Activated CD4-positive, alpha-beta T cell treated with anti-CD3 and anti-CD28 coated beads for 36 hours (primary cell): ENCODE measurements at regions of chr16 and their contacts with region 1.

Region 1: DNA sequence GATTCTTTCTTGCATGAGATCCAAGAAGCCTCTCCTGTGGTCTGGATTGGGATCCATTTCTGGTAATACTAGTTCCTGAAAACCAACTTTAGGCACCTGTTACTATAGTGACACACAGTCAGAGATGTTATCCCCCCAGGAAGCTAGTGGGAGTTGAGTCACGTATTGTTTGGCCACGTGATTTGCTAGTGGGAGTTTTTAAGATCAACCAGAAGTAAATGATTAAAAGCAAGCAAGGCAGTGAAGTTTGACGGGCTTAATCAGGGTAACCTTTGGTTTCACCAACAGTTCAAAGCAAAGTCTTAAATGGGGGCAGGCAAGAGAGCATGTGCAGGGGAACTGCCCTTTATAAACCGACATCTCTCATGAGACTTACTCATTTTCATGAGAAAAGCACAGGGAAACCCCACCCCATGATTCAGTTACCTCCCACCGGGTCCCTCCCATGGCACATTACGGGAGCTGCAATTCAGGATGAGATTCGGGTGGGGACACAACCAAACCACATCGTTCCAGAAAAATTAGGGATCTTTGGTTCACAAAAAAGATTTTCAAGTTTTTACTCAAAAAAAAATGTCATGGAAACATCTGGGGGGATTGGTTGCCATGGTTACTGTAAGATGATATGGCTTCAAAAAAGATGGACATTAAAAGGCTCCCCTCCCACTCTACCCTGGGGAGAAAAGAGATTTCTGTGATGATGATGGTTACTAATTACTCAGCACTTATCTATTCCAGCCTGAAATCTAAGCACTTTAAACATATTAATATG is 483.1 kb upstream of the ERCC4 start:
- DNase-seq: peak; percentile 37
- ATAC-seq: peak; percentile 71
- H3K4me3 Mint-ChIP-seq: no peak overlapping the region
- H3K27ac Mint-ChIP-seq: peak overlapping the region; percentile 20
- H3K4me1 Mint-ChIP-seq: peaks cover 15% of the 10 kb centered on the region
- H3K27me3 Mint-ChIP-seq: no peaks in the 10 kb centered on the region

Region 2: GRCh38 chr16:12881740-12882139 is 555.1 kb before region 1 on chr16:
- CTCF ChIA-PET with region 1: no interaction called
- POLR2A ChIA-PET with region 1: no interaction called
- intact Hi-C with region 1: no loop called
- DNase-seq: no peak
- ATAC-seq: no peak
- H3K4me3 Mint-ChIP-seq: no peak overlapping the region
- H3K27ac Mint-ChIP-seq: no peak overlapping the region
- H3K4me1 Mint-ChIP-seq: no peaks in the 10 kb centered on the region
- H3K27me3 Mint-ChIP-seq: peaks cover 14% of the 10 kb centered on the region

Region 3: GRCh38 chr16:13206606-13207005 is 230.2 kb before region 1 on chr16:
- CTCF ChIA-PET with region 1: no interaction called
- POLR2A ChIA-PET with region 1: no interaction called
- intact Hi-C with region 1: loop called in 1 of 2 experiments (anchors 5 kb)
- DNase-seq: no peak
- ATAC-seq: no peak
- H3K4me3 Mint-ChIP-seq: no peak overlapping the region
- H3K27ac Mint-ChIP-seq: no peak overlapping the region
- H3K4me1 Mint-ChIP-seq: no peaks in the 10 kb centered on the region
- H3K27me3 Mint-ChIP-seq: no peaks in the 10 kb centered on the region

Region 4: DNA sequence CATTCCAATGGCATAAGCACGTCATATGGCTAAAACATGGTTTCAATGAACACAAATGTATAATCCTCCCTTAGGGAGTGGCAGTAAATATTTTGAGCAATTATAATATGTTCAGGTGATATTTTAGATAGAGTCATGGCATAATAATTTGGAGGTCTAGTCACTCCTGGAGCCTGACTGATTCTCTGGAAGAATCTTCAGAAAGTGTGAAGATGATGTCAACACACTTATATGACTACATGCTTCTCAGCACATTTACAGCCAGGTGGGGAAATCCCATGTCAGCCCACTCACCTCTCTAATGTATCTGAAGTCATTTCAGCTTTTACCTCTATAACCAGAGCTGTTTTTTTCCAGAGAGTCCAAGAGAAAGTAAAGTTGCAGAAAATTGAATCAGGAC is 60.7 kb before region 1 on chr16:
- CTCF ChIA-PET with region 1: no interaction called
- POLR2A ChIA-PET with region 1: interaction called, 4 read pairs
- intact Hi-C with region 1: loop called in 1 of 2 experiments (anchors 5 kb)
- DNase-seq: peak; percentile 63
- ATAC-seq: peak; percentile 90
- H3K4me3 Mint-ChIP-seq: no peak overlapping the region
- H3K27ac Mint-ChIP-seq: no peak overlapping the region
- H3K4me1 Mint-ChIP-seq: peaks cover 4% of the 10 kb centered on the region
- H3K27me3 Mint-ChIP-seq: no peaks in the 10 kb centered on the region

Region 5: DNA sequence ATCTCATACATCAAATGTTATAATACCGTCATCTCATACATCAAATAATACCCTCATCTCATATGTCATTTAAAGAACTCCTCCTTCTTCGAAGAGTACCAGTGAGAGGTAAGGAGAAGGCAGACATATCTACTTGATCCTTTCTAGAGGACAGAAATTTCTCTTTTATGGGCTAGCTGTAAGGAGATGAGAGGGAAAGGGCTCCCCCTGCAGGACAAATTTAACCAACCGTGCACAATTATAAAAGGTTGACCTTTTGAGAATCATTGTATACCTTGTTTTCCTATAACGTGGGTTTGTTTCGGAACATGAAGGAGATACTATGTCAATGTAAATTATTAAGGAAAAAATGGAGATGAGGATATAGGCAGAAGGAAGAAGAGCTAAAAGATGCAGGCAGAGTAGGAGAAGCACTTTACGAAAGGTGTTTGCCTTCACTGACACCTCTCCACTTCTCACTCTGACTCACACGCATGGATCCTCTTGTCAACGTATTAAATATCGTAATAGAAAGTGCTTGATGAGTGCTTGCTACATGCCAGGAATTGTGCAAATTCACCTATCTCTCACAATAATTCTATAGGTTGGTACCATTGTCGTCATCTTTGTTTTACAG is 17.2 kb after region 1 on chr16:
- CTCF ChIA-PET with region 1: interaction called, 10 read pairs
- POLR2A ChIA-PET with region 1: no interaction called
- intact Hi-C with region 1: no loop called
- DNase-seq: peak; percentile 56
- ATAC-seq: no peak
- H3K4me3 Mint-ChIP-seq: no peak overlapping the region
- H3K27ac Mint-ChIP-seq: no peak overlapping the region
- H3K4me1 Mint-ChIP-seq: no peaks in the 10 kb centered on the region
- H3K27me3 Mint-ChIP-seq: peaks cover 15% of the 10 kb centered on the region

Region 6: GRCh38 chr16:14013571-14014282 is 576.9 kb after region 1 on chr16:
- CTCF ChIA-PET with region 1: no interaction called
- POLR2A ChIA-PET with region 1: no interaction called
- intact Hi-C with region 1: no loop called
- DNase-seq: no peak
- ATAC-seq: no peak
- H3K4me3 Mint-ChIP-seq: no peak overlapping the region
- H3K27ac Mint-ChIP-seq: no peak overlapping the region
- H3K4me1 Mint-ChIP-seq: no peaks in the 10 kb centered on the region
- H3K27me3 Mint-ChIP-seq: peaks cover 11% of the 10 kb centered on the region